ENCODE measurements at regions of chr12 and their contacts with region 1.

Region 1: DNA sequence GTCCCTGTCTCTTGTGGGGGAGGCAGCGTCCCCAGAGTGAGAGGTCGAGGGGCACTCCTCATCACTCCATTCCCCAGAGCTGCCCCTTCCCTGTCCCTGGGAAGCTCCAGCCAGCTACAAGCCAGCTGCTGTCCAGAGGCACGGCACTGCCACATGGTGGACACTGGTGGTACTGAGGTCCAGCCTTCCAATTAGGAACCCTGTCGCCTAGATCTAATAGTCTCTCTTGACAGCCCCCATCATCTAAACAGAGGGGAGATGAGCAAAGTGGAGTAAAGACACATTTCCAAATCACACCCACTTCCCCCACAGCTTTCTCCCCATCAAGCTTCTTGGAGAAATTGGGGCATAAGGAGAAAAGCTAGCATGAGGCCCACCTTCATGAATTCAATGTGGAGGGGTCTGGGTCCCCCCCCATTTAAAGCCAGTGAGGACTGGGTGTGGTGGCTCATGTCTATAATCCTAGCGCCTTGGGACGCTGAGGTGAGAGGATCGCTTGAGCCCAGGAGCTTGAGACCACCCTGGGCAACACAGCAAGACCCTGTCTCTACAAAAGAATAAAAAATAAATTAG is 2.1 kb upstream of the INHBE start:
- DNase-seq: peak; percentile 62
- H3K4me3 Mint-ChIP-seq: no peak overlapping the region
- H3K27ac Mint-ChIP-seq: no peak overlapping the region
- H3K4me1 Mint-ChIP-seq: peaks cover 20% of the 10 kb centered on the region
- H3K27me3 Mint-ChIP-seq: peaks cover 2% of the 10 kb centered on the region

Region 2: GRCh38 chr12:57101844-57102695 is 351.0 kb before region 1 on chr12:
- CTCF ChIA-PET with region 1: no interaction called
- POLR2A ChIA-PET with region 1: no interaction called
- DNase-seq: no peak
- H3K4me3 Mint-ChIP-seq: no peak overlapping the region
- H3K27ac Mint-ChIP-seq: peak overlapping the region; percentile 26
- H3K4me1 Mint-ChIP-seq: peaks cover 20% of the 10 kb centered on the region
- H3K27me3 Mint-ChIP-seq: no peaks in the 10 kb centered on the region

Region 3: GRCh38 chr12:57238854-57239554 is 214.0 kb before region 1 on chr12:
- CTCF ChIA-PET with region 1: interaction called, 13 read pairs
- POLR2A ChIA-PET with region 1: no interaction called
- DNase-seq: peak; percentile 92
- H3K4me3 Mint-ChIP-seq: peak overlapping the region; percentile 95
- H3K27ac Mint-ChIP-seq: peak overlapping the region; percentile 83
- H3K4me1 Mint-ChIP-seq: peaks cover 79% of the 10 kb centered on the region
- H3K27me3 Mint-ChIP-seq: peaks cover 48% of the 10 kb centered on the region

Region 4: GRCh38 chr12:57261428-57261865 is 191.6 kb before region 1 on chr12:
- CTCF ChIA-PET with region 1: interaction called, 28 read pairs
- POLR2A ChIA-PET with region 1: no interaction called
- DNase-seq: no peak
- H3K4me3 Mint-ChIP-seq: no peak overlapping the region
- H3K27ac Mint-ChIP-seq: no peak overlapping the region
- H3K4me1 Mint-ChIP-seq: peaks cover 4% of the 10 kb centered on the region
- H3K27me3 Mint-ChIP-seq: no peaks in the 10 kb centered on the region

Region 5: DNA sequence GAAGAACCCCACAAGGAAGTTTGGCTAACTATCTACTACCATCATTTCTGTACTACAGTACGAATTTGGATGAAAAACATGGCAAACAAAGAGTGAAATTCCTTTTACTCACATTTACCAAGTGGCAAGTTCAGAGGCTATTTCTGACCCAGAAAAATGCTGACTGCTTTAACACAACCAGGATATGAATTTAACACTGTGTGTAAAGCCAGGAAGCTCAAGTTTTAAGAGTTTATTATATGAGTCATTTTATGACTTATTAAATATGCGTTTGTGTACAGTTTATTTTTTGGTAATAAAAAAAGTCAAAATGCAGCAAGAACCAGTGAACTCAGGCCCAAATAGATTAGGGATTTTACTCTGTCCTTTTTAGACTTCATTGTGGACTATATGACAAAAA is 143.6 kb before region 1 on chr12:
- CTCF ChIA-PET with region 1: interaction called, 106 read pairs
- POLR2A ChIA-PET with region 1: interaction called, 6 read pairs
- DNase-seq: no peak
- H3K4me3 Mint-ChIP-seq: no peak overlapping the region
- H3K27ac Mint-ChIP-seq: no peak overlapping the region
- H3K4me1 Mint-ChIP-seq: peaks cover 10% of the 10 kb centered on the region
- H3K27me3 Mint-ChIP-seq: no peaks in the 10 kb centered on the region

Region 6: GRCh38 chr12:57416039-57416996 is 36.7 kb before region 1 on chr12:
- CTCF ChIA-PET with region 1: interaction called, 10 read pairs
- POLR2A ChIA-PET with region 1: interaction called, 3 read pairs
- DNase-seq: no peak
- H3K4me3 Mint-ChIP-seq: no peak overlapping the region
- H3K27ac Mint-ChIP-seq: no peak overlapping the region
- H3K4me1 Mint-ChIP-seq: peaks cover 1% of the 10 kb centered on the region
- H3K27me3 Mint-ChIP-seq: no peaks in the 10 kb centered on the region

Region 7: GRCh38 chr12:57430931-57431720 is 21.9 kb before region 1 on chr12 and contains the start of gene R3HDM2:
- CTCF ChIA-PET with region 1: interaction called, 13 read pairs
- POLR2A ChIA-PET with region 1: interaction called, 7 read pairs
- DNase-seq: peak; percentile 96
- H3K4me3 Mint-ChIP-seq: peak within 1 kb of the TSS; percentile 99
- H3K27ac Mint-ChIP-seq: peak within 1 kb of the TSS; percentile 99
- H3K4me1 Mint-ChIP-seq: peaks cover 43% of the 10 kb centered on the region
- H3K27me3 Mint-ChIP-seq: no peaks in the 10 kb centered on the region
- total RNA-seq, gene R3HDM2: 70.2 to 71.5 TPM

Region 8: DNA sequence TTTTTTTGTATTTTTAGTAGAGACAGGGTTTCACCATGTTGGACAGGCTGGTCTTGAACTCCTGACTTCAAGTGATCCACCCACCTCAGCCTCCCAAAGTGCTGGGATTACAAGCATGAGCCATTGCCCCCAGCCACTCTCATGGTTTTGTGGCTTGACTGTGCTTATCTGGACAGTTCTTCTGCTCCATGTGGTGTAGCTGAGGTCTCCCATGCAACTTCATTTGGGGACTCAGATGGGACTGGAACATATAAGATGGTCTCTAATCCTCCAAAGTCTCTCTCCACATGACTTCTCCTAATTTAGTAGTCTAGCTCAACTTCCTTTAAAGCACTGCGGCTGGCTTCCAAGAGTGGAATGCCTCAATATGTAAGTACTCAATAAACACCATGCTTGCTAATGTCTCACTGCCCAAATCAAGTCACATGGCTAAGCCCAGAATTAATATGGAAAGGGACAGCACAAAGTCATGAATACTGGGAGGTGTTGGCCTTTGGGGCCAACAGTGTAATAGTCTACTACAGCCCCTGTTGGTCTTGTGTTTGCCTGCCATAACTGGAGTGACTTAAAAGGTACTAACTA is 11.1 kb before region 1 on chr12:
- CTCF ChIA-PET with region 1: interaction called, 13 read pairs
- POLR2A ChIA-PET with region 1: no interaction called
- DNase-seq: no peak
- H3K4me3 Mint-ChIP-seq: no peak overlapping the region
- H3K27ac Mint-ChIP-seq: no peak overlapping the region
- H3K4me1 Mint-ChIP-seq: peaks cover 3% of the 10 kb centered on the region
- H3K27me3 Mint-ChIP-seq: peaks cover 11% of the 10 kb centered on the region

Region 9: DNA sequence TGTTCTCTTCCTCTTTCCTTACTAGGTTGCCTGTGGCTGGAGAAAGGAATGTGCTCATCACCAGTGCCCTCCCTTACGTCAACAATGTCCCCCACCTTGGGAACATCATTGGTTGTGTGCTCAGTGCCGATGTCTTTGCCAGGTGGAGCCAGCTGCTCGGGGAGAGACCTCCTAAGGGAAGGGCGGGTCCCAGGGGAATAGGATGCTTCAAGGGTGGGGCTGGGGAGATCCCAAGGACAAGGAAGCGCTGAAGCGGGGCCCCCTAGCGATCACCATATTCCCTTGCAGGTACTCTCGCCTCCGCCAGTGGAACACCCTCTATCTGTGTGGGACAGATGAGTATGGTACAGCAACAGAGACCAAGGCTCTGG is 45.1 kb after region 1 on chr12:
- CTCF ChIA-PET with region 1: no interaction called
- POLR2A ChIA-PET with region 1: no interaction called
- DNase-seq: no peak
- H3K4me3 Mint-ChIP-seq: no peak overlapping the region
- H3K27ac Mint-ChIP-seq: no peak overlapping the region
- H3K4me1 Mint-ChIP-seq: peaks cover 5% of the 10 kb centered on the region
- H3K27me3 Mint-ChIP-seq: no peaks in the 10 kb centered on the region

Measured in activated CD4-positive, alpha-beta memory T cell treated with anti-CD3 and anti-CD28 coated beads, Interleukin-2, amount 10 ng/mL, durations not matched to agents 7 days and 5 days (primary cell).